ENCODE measurements at regions of chr6 and their contacts with region 1.

Region 1: GRCh38 chr6:73675466-73676098 is 20.4 kb upstream of the CD109 start:
- DNase-seq: peak in 8 of 10 donors; percentile 67 to 91 (median 76)

Region 2: DNA sequence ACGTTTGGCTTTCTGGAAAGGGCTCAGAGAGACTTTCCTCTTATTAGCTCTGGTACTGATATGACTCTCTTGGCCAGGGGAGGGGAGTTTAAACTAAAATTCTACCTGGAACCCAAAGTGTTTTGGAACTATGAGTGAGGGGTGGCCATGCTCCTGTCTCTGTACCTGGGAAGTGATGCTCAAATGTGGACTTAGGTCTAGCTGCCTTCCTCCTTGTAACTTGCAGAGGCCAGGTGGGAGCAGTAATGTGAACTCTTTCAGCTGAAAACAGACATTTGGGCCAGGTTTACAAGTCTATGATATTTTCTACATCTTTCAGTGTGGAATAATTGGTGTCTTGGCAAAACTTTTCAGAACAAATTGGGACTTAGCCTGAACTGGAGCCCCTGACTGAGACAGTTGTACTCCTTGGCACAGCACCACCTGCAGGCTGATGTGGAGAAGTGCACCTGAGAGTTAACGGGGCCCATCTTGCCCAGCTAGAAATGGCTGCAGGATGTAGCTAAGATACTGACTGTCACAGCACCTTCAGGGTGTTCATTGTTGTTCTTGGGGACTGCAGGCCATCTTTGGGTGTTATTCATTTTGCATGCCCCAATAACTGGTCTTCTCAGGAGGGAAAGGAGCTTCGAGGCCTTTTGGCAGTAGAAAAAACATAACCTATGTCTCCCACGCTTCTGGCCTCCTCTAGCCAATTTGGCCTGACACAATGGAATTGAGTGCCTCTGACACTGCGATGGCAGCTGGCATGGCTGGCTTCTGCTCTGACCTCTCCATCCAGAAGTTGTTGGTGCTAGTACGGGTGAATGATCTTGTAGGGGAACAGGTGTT is 57.5 kb after region 1 on chr6:
- intact Hi-C with region 1: loop called (anchors 1 kb)
- DNase-seq: peak; percentile 33 to 92 (median 64)

Measured in posterior cingulate gyrus (tissue), 11 donors.